ENCODE measurements at regions of chr5 and their contacts with region 1.

Region 1: GRCh38 chr5:172006321-172007174 is at the start of gene FBXW11:
- DNase-seq: peak; percentile 87
- ATAC-seq: peak; percentile 89
- H3K4me3 ChIP-seq: peak within 1 kb of the TSS; percentile 100
- H3K27ac ChIP-seq: peak within 1 kb of the TSS; percentile 98
- H3K4me1 ChIP-seq: peaks cover 28% of the 10 kb centered on the region
- H3K27me3 ChIP-seq: no peaks in the 10 kb centered on the region
- CTCF ChIP-seq: no peak
- EP300 ChIP-seq: no peak
- POLR2A ChIP-seq: peak; percentile 97
- RAD21 ChIP-seq: no peak
- polyA plus RNA-seq, gene FBXW11: 4.3 to 7.7 TPM

Region 2: DNA sequence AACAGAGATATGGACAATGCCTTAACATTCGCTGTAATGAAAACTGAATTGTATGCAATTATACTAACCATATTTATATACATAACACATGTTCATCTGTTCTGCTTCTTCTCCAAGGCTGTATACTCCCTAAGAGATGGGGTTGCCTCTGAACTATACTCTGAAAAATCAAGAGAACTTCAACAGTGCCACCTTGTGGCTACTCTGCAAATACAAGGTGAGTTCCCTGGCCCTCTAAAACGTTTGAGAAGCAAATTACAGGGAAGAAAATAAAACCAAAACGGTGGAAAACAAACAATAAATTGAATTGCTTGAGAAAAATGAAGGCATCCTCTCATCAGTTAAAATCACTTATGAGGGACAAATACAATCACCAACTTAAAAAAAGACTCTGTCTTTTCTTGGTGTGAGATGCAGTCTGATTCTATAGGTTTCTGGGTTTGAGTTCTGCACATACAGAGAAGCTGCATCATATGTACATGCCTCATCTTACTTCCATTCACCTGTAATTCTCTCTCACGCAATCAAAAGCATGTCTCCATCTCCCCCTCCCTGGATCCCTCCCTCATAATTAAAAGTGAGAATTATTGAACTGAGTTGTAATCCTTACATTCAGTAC is 98.7 kb before region 1 on chr5:
- CTCF ChIA-PET with region 1: interaction called, 179 read pairs
- POLR2A ChIA-PET with region 1: interaction called, 30 read pairs
- RAD21 ChIA-PET with region 1: interaction called, 97 read pairs
- SMC1A ChIA-PET with region 1: interaction called, 167 read pairs
- in situ Hi-C with region 1: no loop called
- intact Hi-C with region 1: loop called (anchors 1 kb)
- DNase-seq: no peak
- ATAC-seq: peak; percentile 87
- H3K4me3 ChIP-seq: no peak overlapping the region
- H3K27ac ChIP-seq: no peak overlapping the region
- H3K4me1 ChIP-seq: peaks cover 29% of the 10 kb centered on the region
- H3K27me3 ChIP-seq: no peaks in the 10 kb centered on the region
- CTCF ChIP-seq: peak; percentile 65 to 76 (median 72)
- EP300 ChIP-seq: no peak
- POLR2A ChIP-seq: no peak
- RAD21 ChIP-seq: peak; percentile 75

Region 3: GRCh38 chr5:171927345-171927941 is 79.1 kb before region 1 on chr5:
- CTCF ChIA-PET with region 1: interaction called, 4 read pairs
- POLR2A ChIA-PET with region 1: interaction called, 3 read pairs
- RAD21 ChIA-PET with region 1: interaction called, 3 read pairs
- SMC1A ChIA-PET with region 1: interaction called, 4 read pairs
- in situ Hi-C with region 1: no loop called
- intact Hi-C with region 1: loop called (anchors 5 kb)
- DNase-seq: no peak
- ATAC-seq: peak; percentile 38
- H3K4me3 ChIP-seq: no peak overlapping the region
- H3K27ac ChIP-seq: no peak overlapping the region
- H3K4me1 ChIP-seq: peaks cover 17% of the 10 kb centered on the region
- H3K27me3 ChIP-seq: no peaks in the 10 kb centered on the region
- CTCF ChIP-seq: peak in 1 of 3 experiments; percentile 37; a peak in 2 of 6 replicates
- EP300 ChIP-seq: no peak
- POLR2A ChIP-seq: no peak
- RAD21 ChIP-seq: peak; percentile 15; the same call in 1 of the 2 replicates

Region 4: GRCh38 chr5:171961117-171961516 is 45.4 kb before region 1 on chr5:
- CTCF ChIA-PET with region 1: interaction called, 11 read pairs
- POLR2A ChIA-PET with region 1: interaction called, 5 read pairs
- RAD21 ChIA-PET with region 1: interaction called, 49 read pairs
- SMC1A ChIA-PET with region 1: interaction called, 29 read pairs
- in situ Hi-C with region 1: no loop called
- intact Hi-C with region 1: loop called (anchors 5 kb)
- DNase-seq: peak; percentile 74
- ATAC-seq: peak; percentile 88
- H3K4me3 ChIP-seq: no peak overlapping the region
- H3K27ac ChIP-seq: peak overlapping the region; percentile 51
- H3K4me1 ChIP-seq: peaks cover 43% of the 10 kb centered on the region
- H3K27me3 ChIP-seq: no peaks in the 10 kb centered on the region
- CTCF ChIP-seq: no peak
- EP300 ChIP-seq: peak; percentile 16 to 81; a peak in 1 of 4 replicates
- POLR2A ChIP-seq: no peak
- RAD21 ChIP-seq: 0 out of 2 replicates have a peak, but pooled peaks have one; percentile 2

Region 5: DNA sequence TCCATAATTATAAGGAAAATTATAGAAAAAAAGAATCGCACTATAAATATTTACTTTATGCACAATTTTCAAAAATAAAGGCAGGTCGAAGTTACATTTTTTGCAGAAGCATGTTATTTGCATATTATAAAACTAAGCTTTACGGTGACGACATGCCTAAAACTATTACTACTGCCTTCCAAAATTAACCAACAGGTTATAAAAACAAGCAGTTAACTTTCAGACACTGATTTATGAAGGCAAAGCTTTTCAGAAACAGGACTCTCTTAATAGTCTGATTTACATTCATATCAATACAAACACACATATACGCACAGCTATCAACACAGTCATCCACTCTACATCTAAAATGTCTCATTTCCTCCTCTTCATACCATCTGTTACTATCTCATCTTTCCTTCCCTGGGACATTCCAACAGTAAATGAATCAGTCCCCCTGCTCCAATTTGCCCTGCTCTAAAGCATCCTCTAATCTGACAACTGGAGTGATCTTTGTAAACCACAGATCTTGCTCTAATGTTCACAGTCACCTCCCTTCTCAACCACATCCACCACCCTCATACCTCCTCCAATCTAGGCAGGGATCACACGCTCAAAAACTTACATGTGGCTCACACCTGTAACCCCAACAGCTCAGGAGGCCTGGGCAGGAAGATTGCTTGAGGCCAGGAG is 21.7 kb before region 1 on chr5:
- CTCF ChIA-PET with region 1: interaction called, 6 read pairs
- POLR2A ChIA-PET with region 1: interaction called, 6 read pairs
- RAD21 ChIA-PET with region 1: interaction called, 13 read pairs
- SMC1A ChIA-PET with region 1: interaction called, 9 read pairs
- in situ Hi-C with region 1: no loop called
- intact Hi-C with region 1: no loop called
- DNase-seq: no peak
- ATAC-seq: peak; percentile 61
- H3K4me3 ChIP-seq: no peak overlapping the region
- H3K27ac ChIP-seq: peak overlapping the region; percentile 40; the same call in 1 of the 2 replicates
- H3K4me1 ChIP-seq: peaks cover 53% of the 10 kb centered on the region
- H3K27me3 ChIP-seq: no peaks in the 10 kb centered on the region
- CTCF ChIP-seq: no peak
- EP300 ChIP-seq: no peak
- POLR2A ChIP-seq: no peak
- RAD21 ChIP-seq: no peak

Region 6: GRCh38 chr5:172035039-172035438 is 28.5 kb after region 1 on chr5:
- CTCF ChIA-PET with region 1: interaction called, 7 read pairs
- POLR2A ChIA-PET with region 1: interaction called, 5 read pairs
- RAD21 ChIA-PET with region 1: interaction called, 26 read pairs
- SMC1A ChIA-PET with region 1: interaction called, 5 read pairs
- in situ Hi-C with region 1: no loop called
- intact Hi-C with region 1: no loop called
- DNase-seq: peak; percentile 33
- ATAC-seq: peak; percentile 89
- H3K4me3 ChIP-seq: no peak overlapping the region
- H3K27ac ChIP-seq: no peak overlapping the region; the same call in 1 of the 2 replicates
- H3K4me1 ChIP-seq: peaks cover 5% of the 10 kb centered on the region
- H3K27me3 ChIP-seq: no peaks in the 10 kb centered on the region
- CTCF ChIP-seq: no peak
- EP300 ChIP-seq: no peak
- POLR2A ChIP-seq: no peak
- RAD21 ChIP-seq: no peak

Region 7: GRCh38 chr5:172044631-172045314 is 38.2 kb after region 1 on chr5:
- CTCF ChIA-PET with region 1: interaction called, 20 read pairs
- POLR2A ChIA-PET with region 1: no interaction called
- RAD21 ChIA-PET with region 1: interaction called, 5 read pairs
- SMC1A ChIA-PET with region 1: interaction called, 4 read pairs
- in situ Hi-C with region 1: no loop called
- intact Hi-C with region 1: no loop called
- DNase-seq: no peak
- ATAC-seq: no peak
- H3K4me3 ChIP-seq: no peak overlapping the region
- H3K27ac ChIP-seq: no peak overlapping the region
- H3K4me1 ChIP-seq: no peaks in the 10 kb centered on the region
- H3K27me3 ChIP-seq: no peaks in the 10 kb centered on the region
- CTCF ChIP-seq: 0 out of 6 replicates have a peak, but pooled peaks of 1 of the 3 experiments have one; percentile 1
- EP300 ChIP-seq: no peak
- POLR2A ChIP-seq: no peak
- RAD21 ChIP-seq: peak; percentile 17; the same call in 1 of the 2 replicates

Measured in GM12878 (cell line).